ENCODE measurements at regions of chr2 and their contacts with region 1.

Region 1: GRCh38 chr2:237858294-237859081 is 935 bp upstream of the RAMP1 start:
- DNase-seq: no peak

Region 2: DNA sequence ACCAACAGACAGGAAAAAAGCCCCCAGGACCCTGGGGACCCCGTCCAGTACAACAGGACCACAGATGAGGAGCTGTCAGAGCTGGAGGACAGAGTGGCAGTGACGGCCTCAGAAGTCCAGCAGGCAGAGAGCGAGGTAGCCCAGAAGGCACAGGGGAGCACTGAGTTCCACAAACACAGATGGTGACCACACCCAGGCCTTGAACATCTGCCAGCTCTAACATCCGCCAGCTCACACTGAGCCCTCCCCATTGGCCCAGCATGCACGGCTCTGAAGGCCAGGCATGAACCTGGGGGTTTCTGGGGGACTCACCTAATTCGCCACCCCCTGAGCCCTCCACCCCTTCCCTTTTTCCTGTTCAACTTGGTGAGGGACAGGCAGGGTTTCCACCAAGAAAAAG is 317.7 kb before region 1 on chr2:
- intact Hi-C with region 1: no loop called
- DNase-seq: no peak

Region 3: GRCh38 chr2:237886685-237887481 is 28.4 kb after region 1 on chr2:
- intact Hi-C with region 1: loop called (anchors 1 kb)
- DNase-seq: peak; percentile 91

Region 4: DNA sequence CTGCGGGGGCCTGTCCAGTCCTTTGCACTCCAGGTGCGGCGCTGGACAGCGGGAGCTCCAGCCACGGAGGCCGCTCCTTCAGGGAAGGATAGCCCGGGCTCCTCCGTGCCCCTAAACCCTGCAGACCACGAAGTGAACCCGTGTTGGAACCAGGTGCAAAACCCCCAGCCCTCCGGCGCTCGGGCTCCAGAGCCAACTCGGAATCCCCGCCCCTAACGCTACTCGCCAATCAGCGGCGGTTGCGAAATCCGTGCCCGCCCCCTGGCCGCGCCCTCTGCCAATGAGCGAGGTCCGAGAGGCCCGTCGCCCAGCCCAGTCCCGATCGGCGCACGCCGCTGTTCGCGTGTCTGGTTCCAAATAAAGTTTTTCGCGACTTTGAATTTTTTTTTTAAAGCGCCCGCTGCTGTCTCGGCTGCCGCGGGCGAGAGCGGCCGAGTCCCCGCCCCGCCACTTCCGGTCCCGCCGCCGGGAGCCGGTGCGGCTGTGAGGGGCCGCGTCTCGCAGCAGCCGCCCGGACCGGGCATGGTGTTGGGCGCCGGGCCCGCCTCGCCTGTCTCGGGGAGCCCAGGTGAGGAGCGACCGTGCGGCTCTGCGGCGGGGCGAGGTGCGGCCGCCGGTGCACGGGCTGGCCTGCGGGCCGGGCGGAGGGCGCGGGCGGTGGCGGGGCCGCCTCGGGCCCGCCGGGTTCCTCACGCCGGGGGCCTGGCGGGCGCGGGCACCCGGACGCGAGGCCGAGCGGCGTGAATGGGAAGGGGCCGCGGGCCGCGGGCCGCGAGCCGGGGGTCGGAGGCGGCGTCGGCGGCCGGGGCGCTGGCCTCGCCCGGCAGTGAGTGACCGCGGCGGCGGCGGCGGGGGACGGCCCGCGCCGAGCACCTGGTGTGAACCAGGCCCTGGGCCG is 108.3 kb after region 1 on chr2 and contains the start of gene UBE2F:
- intact Hi-C with region 1: loop called (anchors 5 kb)
- DNase-seq: peak; percentile 99
- total RNA-seq, gene UBE2F: 61.0 TPM

Region 5: DNA sequence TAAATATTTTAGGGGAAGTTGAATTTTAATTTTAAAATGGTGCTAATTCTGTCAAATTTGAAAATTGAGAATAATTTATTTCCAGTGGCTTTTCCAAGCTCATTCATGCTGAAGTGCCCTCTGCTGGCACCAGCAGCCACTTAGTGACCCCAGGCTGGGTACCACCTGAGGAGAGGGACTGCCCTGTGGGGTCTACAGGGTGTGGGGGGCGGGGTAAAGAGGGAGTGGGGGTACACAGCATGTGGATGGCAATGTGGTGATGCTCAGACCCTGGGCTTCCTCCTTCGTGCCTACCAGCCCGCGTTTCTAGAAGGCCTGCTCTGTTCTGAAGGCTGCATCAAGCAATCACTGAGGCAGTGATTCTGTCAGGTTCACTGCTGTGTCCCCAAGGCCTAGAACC is 157.2 kb after region 1 on chr2:
- intact Hi-C with region 1: loop called (anchors 5 kb)
- DNase-seq: no peak

Region 6: DNA sequence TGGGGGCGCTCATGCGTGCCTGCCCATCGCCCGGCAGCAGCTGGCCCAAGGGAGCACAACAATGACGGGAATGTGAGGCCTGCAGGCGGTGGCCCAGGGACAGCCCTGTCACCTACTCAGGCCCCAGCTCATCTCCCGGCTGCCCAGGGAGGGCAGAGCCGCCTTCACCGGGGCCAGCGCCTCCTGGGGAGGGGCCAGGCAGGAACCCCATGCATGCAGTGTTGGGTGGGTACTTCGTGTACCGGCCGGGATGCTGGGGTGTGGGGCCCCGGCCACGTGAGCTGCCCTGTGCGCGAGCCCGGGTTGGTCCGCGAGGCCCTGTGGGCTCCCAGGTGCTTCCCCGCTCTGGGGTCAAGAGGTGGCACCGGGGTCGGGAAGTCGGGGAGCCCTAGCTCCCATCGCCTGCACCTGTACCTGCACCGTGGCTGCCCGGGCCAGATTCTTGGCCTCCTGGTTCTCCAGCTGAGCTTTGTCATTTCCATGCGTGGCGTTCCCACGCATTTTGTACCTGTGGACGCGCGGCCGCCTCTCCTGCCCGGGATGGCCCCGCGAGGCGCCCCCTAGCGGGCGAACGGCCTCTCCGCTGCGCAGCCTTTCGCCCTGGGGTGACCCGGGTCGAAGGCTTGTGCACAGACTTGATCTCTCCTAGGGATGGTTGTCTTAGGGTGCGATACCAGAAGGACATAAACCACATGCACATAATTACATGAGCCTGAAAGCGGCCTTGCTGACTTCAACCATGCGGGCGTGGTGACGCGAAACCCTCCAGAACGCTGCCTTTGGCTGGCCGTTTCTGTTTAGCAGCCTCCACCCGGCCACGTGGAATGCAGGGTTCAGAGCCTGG is 280.9 kb after region 1 on chr2:
- intact Hi-C with region 1: loop called (anchors 2 kb)
- DNase-seq: no peak

Region 7: DNA sequence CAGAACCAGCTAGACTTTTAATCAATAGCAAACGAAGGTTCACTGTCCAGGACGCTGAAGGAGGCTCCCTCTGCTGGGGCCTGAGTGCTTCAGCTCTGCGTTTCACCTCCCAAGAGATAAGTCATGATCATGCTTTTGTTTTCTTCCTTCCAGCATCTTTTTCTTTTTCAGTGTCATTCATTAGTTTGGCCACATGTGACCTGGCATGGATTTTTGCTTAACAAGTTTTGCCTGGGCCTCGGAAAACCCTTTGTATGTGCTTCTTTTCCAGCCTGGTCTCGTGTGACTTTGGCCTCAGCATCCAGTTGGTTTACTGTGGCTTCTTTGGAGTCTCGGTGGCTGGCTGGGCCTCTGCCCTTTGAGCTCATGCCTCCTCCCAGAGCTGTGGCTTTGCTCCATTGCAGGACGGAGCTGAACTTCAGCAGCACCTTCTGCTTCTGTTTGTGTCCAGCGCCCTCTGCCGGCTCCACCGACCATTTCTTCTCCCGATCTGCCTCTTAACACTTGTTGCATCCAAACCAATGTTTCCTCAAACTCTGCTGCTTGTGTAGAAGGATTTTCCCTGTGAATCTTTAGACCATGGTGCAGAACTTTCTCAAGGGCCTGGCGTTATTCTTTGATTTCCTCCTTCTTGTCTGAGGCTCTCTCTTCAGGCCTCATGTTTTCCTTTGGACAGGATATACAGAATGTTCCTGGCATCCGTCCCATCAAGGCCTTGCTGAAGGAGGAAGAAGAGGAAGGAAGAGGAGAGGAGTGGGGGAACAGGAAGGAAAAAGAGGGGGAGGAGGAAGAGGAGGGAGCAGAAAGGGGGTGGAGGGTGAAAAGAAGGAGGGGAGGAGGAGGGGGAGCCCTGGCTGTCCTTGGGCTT is 404.9 kb after region 1 on chr2:
- intact Hi-C with region 1: loop called (anchors 5 kb)
- DNase-seq: peak; percentile 95